ENCODE measurements at regions of chr10 and their contacts with region 1.

Region 1: DNA sequence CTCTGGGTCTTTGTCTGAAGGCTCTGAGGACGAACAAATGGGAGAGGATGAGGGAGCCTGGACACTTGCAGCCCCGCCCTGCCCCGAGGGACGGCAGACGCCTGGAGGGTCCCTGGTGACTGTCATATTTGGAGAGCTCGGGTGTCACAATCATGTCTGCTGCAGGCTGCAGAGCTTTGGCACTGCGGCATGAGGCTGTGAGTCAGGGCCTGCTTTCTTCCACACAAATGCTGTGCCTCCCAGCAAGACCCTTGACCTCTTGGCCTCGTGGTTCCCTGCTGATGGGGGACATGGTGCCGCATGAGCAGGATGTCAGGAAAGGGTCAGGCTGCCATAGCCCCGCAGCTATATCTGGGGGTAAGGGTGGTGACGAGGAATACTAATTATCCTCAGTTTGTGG is 64.9 kb upstream of the PPIF start:
- DNase-seq: no peak
- H3K4me3 ChIP-seq: no peak overlapping the region
- H3K27ac ChIP-seq: no peak overlapping the region
- H3K4me1 ChIP-seq: peaks cover 15% of the 10 kb centered on the region
- H3K27me3 ChIP-seq: no peaks in the 10 kb centered on the region
- CTCF ChIP-seq: no peak

Region 2: DNA sequence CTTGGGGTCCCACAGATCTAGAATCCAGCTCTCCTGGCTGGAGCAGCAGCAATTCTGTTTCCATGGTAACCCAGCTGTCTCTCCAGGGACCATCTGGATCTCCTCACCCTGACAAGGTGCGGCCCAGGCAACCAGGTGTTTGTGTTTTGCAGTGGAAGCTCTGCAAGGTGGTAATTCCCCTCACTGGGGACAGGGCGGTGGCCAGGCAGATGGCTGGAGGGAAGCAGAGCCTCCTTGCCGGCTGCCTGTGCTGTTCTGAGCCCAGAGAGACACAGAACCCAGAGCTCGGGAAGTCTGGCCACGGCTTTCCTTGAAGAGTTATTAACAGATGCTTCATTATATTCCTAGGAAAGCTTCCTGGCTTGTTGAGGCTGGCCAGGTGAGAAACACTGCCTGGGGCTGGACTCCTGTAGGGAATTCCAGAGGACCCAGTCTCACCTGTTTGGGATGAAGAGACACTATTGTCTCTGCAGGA is 53.3 kb before region 1 on chr10:
- CTCF ChIA-PET with region 1: no interaction called
- dilution Hi-C with region 1: loop called (anchors 5 kb)
- in situ Hi-C with region 1: no loop called
- intact Hi-C with region 1: no loop called
- DNase-seq: peak; percentile 72
- H3K4me3 ChIP-seq: no peak overlapping the region
- H3K27ac ChIP-seq: peak overlapping the region; percentile 83
- H3K4me1 ChIP-seq: peaks cover 28% of the 10 kb centered on the region
- H3K27me3 ChIP-seq: no peaks in the 10 kb centered on the region
- CTCF ChIP-seq: no peak

Measured in mammary epithelial cell (primary cell).